H1 (cell line): ENCODE measurements at regions of chr2 and their contacts with region 1.

Region 1: DNA sequence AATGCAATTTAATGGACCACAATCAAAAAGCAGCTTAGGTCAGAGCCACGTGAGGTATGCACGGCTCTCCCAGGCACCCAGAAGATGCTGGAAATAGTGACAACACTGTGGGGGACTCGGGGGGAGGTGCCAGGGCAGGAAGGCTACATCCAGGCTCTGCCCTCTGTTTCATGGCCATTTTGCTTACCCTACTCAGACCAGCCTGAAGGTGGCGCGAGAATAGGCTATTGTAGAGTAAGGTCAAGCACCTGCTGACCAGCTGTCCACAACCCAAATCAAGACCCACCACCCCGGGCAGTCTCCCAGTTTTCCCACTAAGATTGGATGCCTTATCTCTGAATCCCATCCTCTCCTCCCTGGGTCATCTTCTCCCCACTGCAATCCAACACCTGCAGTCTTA is 115.7 kb downstream of the VIT start:
- DNase-seq: peak; percentile 9 to 83
- H3K4me3 ChIP-seq: no peak overlapping the region
- H3K27ac ChIP-seq: no peak overlapping the region
- H3K4me1 ChIP-seq: no peaks in the 10 kb centered on the region
- H3K27me3 ChIP-seq: no peaks in the 10 kb centered on the region; a peak in 1 of 7 replicates
- CTCF ChIP-seq: peak; percentile 69 to 83 (median 71)
- EP300 ChIP-seq: no peak
- POLR2A ChIP-seq: no peak
- RAD21 ChIP-seq: peak; percentile 54 to 72

Region 2: DNA sequence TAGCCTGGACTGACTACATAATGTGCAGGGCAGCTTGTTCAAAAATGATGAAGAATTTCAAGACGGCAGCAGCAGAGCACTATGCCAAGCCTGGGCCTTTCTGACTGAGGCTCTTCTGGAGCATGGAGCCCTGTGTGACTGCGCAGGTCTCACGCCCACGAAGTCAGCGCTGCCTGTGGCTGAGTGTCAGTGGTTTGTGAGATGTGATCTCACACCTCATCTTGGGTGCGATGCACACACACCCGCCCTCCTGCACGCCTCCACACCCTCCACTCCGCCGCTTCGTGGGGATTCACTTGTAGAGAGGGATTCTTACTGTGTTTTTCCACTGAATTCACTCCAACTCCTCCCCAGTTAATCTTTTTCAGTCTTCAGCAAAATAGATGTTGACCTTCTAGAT is 11.8 kb before region 1 on chr2:
- CTCF ChIA-PET with region 1: interaction called, 21 read pairs
- POLR2A ChIA-PET with region 1: no interaction called
- DNase-seq: no peak
- H3K4me3 ChIP-seq: no peak overlapping the region
- H3K27ac ChIP-seq: no peak overlapping the region
- H3K4me1 ChIP-seq: peaks cover 0 to 4% (median 1%) of the 10 kb centered on the region in 4 experiments; a peak in 2 of 7 replicates
- H3K27me3 ChIP-seq: no peaks in the 10 kb centered on the region
- CTCF ChIP-seq: no peak
- EP300 ChIP-seq: no peak
- POLR2A ChIP-seq: no peak
- RAD21 ChIP-seq: no peak